ENCODE measurements at regions of chr15 and their contacts with region 1.

Region 1: GRCh38 chr15:88476635-88477060 is 9.1 kb downstream of the MRPS11 start:
- DNase-seq: peak in 4 of 5 donors; percentile 34 to 56 (median 50)
- ATAC-seq: peak; percentile 48 to 93 (median 86)
- H3K4me3 ChIP-seq: no peak overlapping the region
- H3K27ac ChIP-seq: peak overlapping the region in 5 of 12 donors; percentile 2 to 65 (median 19)
- H3K4me1 ChIP-seq: peaks cover 0 to 9% (median 0%) of the 10 kb centered on the region in 12 donors
- H3K27me3 ChIP-seq: no peaks in the 10 kb centered on the region
- CTCF ChIP-seq: peak; percentile 33 to 64 (median 52)
- POLR2A ChIP-seq: no peak

Region 2: GRCh38 chr15:88337993-88338392 is 138.7 kb before region 1 on chr15:
- intact Hi-C with region 1: no loop called
- DNase-seq: no peak
- ATAC-seq: peak in 1 of 4 donors; percentile 33
- H3K4me3 ChIP-seq: no peak overlapping the region
- H3K27ac ChIP-seq: no peak overlapping the region
- H3K4me1 ChIP-seq: no peaks in the 10 kb centered on the region
- H3K27me3 ChIP-seq: no peaks in the 10 kb centered on the region
- CTCF ChIP-seq: no peak
- POLR2A ChIP-seq: no peak

Region 3: DNA sequence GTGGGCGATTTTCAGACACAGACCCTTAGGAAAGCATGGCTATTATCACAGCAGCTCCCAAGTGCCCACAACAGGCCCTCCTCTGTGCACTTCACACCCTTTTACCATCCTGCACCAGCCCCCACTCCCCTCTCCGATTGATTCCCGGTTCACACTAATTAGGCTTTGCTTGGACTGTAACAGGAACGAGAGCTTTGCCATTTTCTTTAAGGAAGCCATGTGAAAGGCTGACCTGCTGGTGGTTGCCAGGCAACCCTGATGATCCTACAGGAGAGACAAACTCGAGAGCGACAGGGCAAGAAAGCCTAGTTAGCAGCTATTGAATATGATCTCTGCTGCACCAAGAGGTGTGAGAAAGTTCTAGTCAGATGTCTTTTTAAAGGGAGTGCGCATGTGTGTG is 98.0 kb after region 1 on chr15:
- intact Hi-C with region 1: loop called in 1 of 10 experiments (anchors 5 kb)
- DNase-seq: no peak
- ATAC-seq: no peak
- H3K4me3 ChIP-seq: no peak overlapping the region
- H3K27ac ChIP-seq: peak overlapping the region in 4 of 12 donors; percentile 5 to 64 (median 14)
- H3K4me1 ChIP-seq: peaks cover 0 to 24% (median 7%) of the 10 kb centered on the region in 12 donors
- H3K27me3 ChIP-seq: no peaks in the 10 kb centered on the region
- CTCF ChIP-seq: no peak
- POLR2A ChIP-seq: no peak

Region 4: DNA sequence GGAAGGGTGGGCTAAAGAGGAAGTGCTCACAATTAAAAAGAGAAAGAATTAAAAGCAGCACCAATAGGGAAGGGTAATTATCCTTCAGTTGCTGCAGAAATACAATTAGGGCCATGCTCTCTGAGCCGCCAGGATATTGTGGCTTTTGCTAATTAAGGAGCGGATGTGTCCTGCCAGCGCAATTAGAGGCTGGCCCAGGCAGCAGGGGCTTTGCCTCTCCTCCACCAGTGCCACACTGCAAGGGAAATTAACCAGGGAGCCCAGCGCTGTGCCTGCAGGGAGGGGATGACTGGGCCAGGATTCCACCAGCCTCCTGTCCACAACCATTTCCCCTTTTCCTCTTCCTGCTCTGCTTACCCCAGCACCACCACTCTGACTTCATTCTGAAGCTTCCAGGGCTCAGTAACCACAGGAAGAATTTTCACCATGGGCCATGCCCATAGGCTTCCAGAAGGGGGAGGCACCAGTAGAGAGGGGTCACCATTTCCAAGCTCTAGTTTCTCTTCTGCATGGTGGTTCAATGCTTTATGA is 134.1 kb after region 1 on chr15:
- intact Hi-C with region 1: loop called (anchors 1 to 5 kb)
- DNase-seq: no peak
- ATAC-seq: no peak
- H3K4me3 ChIP-seq: no peak overlapping the region
- H3K27ac ChIP-seq: no peak overlapping the region
- H3K4me1 ChIP-seq: peaks cover 0 to 3% (median 0%) of the 10 kb centered on the region in 12 donors
- H3K27me3 ChIP-seq: peaks cover 4 to 29% (median 15%) of the 10 kb centered on the region in 9 donors
- CTCF ChIP-seq: no peak
- POLR2A ChIP-seq: no peak